Activated B cell treated with CpG ODN at 0.5 μM for 24 hours (primary cell): ENCODE measurements at regions of chr3 and their contacts with region 1.

Region 1: GRCh38 chr3:136396916-136397315 is 146.8 kb downstream of the PCCB start:
- DNase-seq: no peak
- ATAC-seq: no peak
- H3K4me3 Mint-ChIP-seq: no peak overlapping the region
- H3K27ac Mint-ChIP-seq: no peak overlapping the region
- H3K4me1 Mint-ChIP-seq: no peaks in the 10 kb centered on the region
- H3K27me3 Mint-ChIP-seq: no peaks in the 10 kb centered on the region
- CTCF ChIP-seq: no peak

Region 2: GRCh38 chr3:136366289-136366688 is 30.6 kb before region 1 on chr3:
- CTCF ChIA-PET with region 1: interaction called, 13 read pairs
- POLR2A ChIA-PET with region 1: no interaction called
- intact Hi-C with region 1: no loop called
- DNase-seq: no peak
- ATAC-seq: no peak
- H3K4me3 Mint-ChIP-seq: no peak overlapping the region
- H3K27ac Mint-ChIP-seq: no peak overlapping the region
- H3K4me1 Mint-ChIP-seq: no peaks in the 10 kb centered on the region
- H3K27me3 Mint-ChIP-seq: no peaks in the 10 kb centered on the region
- CTCF ChIP-seq: no peak